PC-9 (cell line): ENCODE measurements at regions of chr7 and their contacts with region 1.

Region 1: DNA sequence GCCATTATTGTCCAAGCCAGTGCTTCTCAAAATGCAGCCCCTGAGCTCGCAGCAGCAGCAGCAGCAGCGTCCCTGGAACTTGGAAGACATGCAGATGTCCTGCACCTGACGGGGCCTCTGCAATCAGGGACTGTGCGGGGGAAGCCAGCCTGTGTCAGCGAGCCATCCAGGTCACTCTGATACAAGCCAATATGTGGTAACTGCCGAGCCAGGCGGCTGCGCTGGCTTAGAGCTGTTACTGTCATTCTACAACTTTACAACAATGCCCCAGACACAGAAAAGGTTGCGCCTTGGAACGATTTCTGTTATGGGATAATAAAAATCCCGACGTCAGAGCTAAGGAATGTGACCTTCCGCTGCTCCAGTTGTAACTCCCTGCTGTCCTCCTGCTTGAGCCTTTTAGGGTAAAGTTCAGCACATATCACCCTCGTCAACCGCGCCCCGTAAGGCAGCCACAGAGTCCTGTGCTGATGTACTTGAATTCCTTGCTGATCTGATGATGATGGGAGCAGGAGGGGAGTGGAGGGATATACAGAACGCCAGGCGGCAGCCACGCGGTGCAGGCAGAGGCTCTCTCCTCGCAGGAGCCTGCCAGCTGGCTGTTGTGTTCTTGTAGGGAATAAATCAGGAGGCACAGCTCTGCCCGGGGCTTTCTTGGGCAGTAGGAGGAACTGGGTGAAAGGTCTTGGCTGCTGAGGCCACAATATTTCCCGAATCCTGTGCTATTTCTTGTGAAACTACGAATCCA is 20.0 kb upstream of the CRYGN start:
- DNase-seq: peak; percentile 86 to 97
- H3K4me3 ChIP-seq: peak overlapping the region; percentile 44; the same call in 1 of the 2 replicates
- H3K27ac ChIP-seq: peak overlapping the region; percentile 75
- H3K4me1 ChIP-seq: peaks cover 29% of the 10 kb centered on the region
- H3K27me3 ChIP-seq: no peaks in the 10 kb centered on the region
- CTCF ChIP-seq: no peak

Region 2: DNA sequence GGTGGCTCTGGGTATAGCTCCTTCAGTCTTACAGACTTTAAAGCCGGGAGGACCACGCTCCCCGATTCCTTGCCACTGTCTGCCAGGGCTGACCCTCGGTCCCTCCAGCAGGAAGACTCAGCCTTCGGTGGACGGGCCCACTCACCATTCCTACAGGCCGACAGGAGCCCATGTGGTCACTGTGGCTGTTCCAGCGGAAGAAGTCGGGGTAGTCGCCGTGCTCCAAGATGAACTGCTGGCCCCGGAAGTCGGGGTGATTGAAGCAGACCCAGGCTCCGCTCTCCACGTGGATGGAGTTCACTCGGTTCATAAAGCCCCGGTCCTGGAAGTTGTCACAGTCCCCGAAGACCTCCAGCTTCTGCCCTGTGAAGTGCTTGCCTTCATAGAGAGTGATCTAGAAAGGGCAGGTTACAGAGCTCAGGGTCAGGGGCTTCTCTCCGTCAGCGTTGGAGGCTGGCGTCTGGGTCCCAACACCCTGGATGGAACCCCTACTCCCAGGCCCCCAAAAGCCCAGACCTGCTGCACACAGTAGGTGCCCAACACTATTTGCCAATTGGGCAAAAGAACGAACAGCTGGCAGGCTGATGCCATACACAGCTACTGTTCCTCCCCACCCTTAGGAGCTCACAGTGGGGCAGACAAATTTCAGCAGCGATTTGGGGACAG is 21.9 kb before region 1 on chr7:
- CTCF ChIA-PET with region 1: no interaction called
- POLR2A ChIA-PET with region 1: interaction called, 18 read pairs
- intact Hi-C with region 1: no loop called
- DNase-seq: no peak
- H3K4me3 ChIP-seq: no peak overlapping the region
- H3K27ac ChIP-seq: no peak overlapping the region
- H3K4me1 ChIP-seq: no peaks in the 10 kb centered on the region
- H3K27me3 ChIP-seq: peaks cover 10% of the 10 kb centered on the region; the same call in 1 of the 2 replicates
- CTCF ChIP-seq: no peak